Heart left ventricle (tissue), 16 donors: ENCODE measurements at regions of chr10 and their contacts with region 1.

Region 1: GRCh38 chr10:116787893-116788665 is 45.7 kb upstream of the HSPA12A start:
- DNase-seq: peak; percentile 69 to 88 (median 81)
- ATAC-seq: peak in 3 of 4 donors; percentile 82 to 87 (median 86)
- H3K4me3 ChIP-seq: peak overlapping the region in 9 of 12 donors; percentile 6 to 39 (median 28)
- H3K27ac ChIP-seq: no peak overlapping the region
- H3K4me1 ChIP-seq: peaks cover 0 to 9% (median 4%) of the 10 kb centered on the region in 12 donors
- H3K27me3 ChIP-seq: peaks cover 0 to 22% (median 0%) of the 10 kb centered on the region in 9 donors
- CTCF ChIP-seq: peak; percentile 98 to 100 (median 99)
- POLR2A ChIP-seq: no peak

Region 2: DNA sequence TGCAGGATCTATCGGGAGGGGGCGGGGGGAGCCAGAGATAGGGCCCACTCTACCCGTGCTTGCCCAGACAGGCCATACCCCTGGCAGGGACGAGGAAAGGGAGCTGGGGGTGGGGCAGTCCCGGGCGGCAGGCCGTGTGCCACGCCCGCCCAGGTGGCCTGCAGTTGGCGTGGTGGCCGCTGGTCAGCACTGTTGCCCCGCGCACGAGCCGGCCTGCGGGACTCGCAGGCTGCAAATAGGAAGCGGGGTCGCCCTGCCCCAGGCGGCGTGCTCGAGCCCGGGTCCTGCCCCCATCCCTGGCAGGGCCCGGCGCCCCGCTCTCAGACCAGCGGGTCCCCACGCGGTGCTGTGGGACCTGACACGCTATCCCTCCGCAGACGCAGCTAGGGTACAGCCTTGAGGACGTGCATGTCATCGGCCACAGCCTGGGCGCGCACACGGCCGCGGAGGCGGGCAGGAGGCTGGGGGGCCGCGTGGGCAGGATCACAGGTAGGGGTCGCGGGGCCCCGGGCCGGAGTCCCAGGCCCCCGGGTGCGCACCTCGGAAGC is 160.6 kb before region 1 on chr10:
- intact Hi-C with region 1: loop called in 2 of 10 experiments (anchors 5 kb)
- DNase-seq: peak in 1 of 5 donors; percentile 30
- ATAC-seq: peak in 3 of 4 donors; percentile 67 to 77 (median 75)
- H3K4me3 ChIP-seq: peak overlapping the region in 7 of 12 donors; percentile 21 to 34 (median 32)
- H3K27ac ChIP-seq: no peak overlapping the region
- H3K4me1 ChIP-seq: peaks cover 0 to 7% (median 0%) of the 10 kb centered on the region in 12 donors
- H3K27me3 ChIP-seq: peaks cover 0 to 42% (median 20%) of the 10 kb centered on the region in 9 donors
- CTCF ChIP-seq: peak in 9 of 12 donors; percentile 27 to 63 (median 43)
- POLR2A ChIP-seq: no peak

Region 3: GRCh38 chr10:116674901-116675423 is 113.1 kb before region 1 on chr10:
- intact Hi-C with region 1: loop called in 1 of 10 experiments (anchors 2 kb)
- DNase-seq: peak in 1 of 5 donors; percentile 65
- ATAC-seq: no peak
- H3K4me3 ChIP-seq: no peak overlapping the region
- H3K27ac ChIP-seq: no peak overlapping the region
- H3K4me1 ChIP-seq: peaks cover 0 to 4% (median 0%) of the 10 kb centered on the region in 12 donors
- H3K27me3 ChIP-seq: peaks cover 0 to 9% (median 3%) of the 10 kb centered on the region in 9 donors
- CTCF ChIP-seq: no peak
- POLR2A ChIP-seq: no peak

Region 4: DNA sequence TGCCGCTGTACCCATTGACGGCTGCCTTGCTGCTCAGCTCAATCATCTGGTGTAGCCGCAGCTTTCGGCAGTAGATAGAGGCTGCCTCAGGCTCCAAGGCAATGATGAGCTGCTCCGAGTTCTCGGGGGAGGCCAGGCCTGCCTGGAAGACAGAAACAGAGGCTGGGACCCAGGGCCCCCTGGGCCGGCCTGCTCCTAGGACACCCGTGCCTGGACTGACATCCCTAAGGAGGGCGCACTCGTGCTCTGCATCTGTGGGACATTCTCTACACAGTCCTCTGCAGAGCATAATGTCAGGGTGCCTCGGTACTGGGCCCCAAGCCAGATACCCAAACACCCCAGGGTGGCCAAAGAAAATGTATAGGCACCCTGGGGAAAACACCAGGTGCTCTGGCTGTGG is 104.3 kb before region 1 on chr10:
- intact Hi-C with region 1: loop called (anchors 1 to 2 kb)
- DNase-seq: no peak
- ATAC-seq: no peak
- H3K4me3 ChIP-seq: no peak overlapping the region
- H3K27ac ChIP-seq: no peak overlapping the region
- H3K4me1 ChIP-seq: peaks cover 0 to 27% (median 16%) of the 10 kb centered on the region in 12 donors
- H3K27me3 ChIP-seq: no peaks in the 10 kb centered on the region
- CTCF ChIP-seq: no peak
- POLR2A ChIP-seq: no peak

Region 5: DNA sequence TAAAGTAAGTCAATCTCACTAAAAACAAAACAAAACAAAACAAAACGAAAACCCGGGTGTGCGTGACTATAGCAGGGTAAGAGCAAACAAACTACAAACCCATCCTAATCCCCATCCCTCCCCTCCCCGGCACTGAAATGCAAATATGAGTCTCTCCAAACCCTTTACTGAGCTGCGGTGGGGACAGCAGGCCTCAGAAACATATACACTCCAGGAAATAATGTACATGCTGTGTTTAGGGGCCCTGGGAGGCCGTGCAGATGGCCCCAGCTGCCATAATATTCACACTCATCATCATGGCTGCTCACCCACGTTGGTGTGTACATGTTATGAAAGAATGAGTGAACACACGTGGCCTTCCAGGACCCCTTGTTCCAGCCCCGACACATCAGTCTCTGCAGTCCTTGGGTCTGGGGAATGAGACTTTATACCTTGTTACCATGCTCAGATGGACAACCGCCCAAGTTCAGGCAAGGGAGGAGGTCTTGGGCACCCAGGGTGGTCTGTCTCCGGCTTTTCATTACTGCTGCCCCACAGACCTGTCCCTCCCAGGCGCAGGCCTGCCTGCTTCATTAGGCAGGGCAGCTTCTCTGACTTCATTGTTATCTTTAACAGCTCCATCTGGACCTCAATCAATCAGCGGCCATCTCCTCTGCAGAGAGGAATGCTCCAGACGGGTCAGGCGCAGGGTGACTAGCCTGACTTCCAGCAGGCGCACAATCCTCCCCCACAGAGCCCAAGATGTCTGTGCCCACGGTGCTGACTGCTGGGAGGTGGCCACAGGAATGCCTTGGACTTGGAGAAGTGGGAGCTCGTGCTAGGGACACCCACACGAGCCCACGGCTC is 66.3 kb before region 1 on chr10:
- intact Hi-C with region 1: no loop called
- DNase-seq: no peak
- ATAC-seq: no peak
- H3K4me3 ChIP-seq: no peak overlapping the region
- H3K27ac ChIP-seq: no peak overlapping the region
- H3K4me1 ChIP-seq: peaks cover 0 to 17% (median 3%) of the 10 kb centered on the region in 12 donors
- H3K27me3 ChIP-seq: no peaks in the 10 kb centered on the region
- CTCF ChIP-seq: no peak
- POLR2A ChIP-seq: no peak

Region 6: GRCh38 chr10:116742367-116743265 is 45.5 kb before region 1 on chr10 and contains the start of gene HSPA12A:
- intact Hi-C with region 1: loop called in 2 of 10 experiments (anchors 5 kb)
- DNase-seq: peak; percentile 82 to 86 (median 84)
- ATAC-seq: peak; percentile 87 to 96 (median 92)
- H3K4me3 ChIP-seq: peak within 1 kb of the TSS; percentile 65 to 93 (median 82)
- H3K27ac ChIP-seq: peak within 1 kb of the TSS; percentile 85 to 97 (median 93)
- H3K4me1 ChIP-seq: peaks cover 0 to 24% (median 11%) of the 10 kb centered on the region in 12 donors
- H3K27me3 ChIP-seq: peaks cover 0 to 49% (median 2%) of the 10 kb centered on the region in 9 donors
- CTCF ChIP-seq: peak in 1 of 12 donors; percentile 4
- POLR2A ChIP-seq: peak; percentile 66 to 92
- total RNA-seq, gene HSPA12A: 11.0 to 17.0 (median 13.8) TPM

Region 7: GRCh38 chr10:116800286-116800929 is 12.3 kb after region 1 on chr10:
- intact Hi-C with region 1: no loop called
- DNase-seq: no peak
- ATAC-seq: no peak
- H3K4me3 ChIP-seq: no peak overlapping the region
- H3K27ac ChIP-seq: no peak overlapping the region
- H3K4me1 ChIP-seq: no peaks in the 10 kb centered on the region
- H3K27me3 ChIP-seq: peaks cover 0 to 19% (median 0%) of the 10 kb centered on the region in 9 donors
- CTCF ChIP-seq: no peak
- POLR2A ChIP-seq: no peak